Sigmoid colon (tissue), 7 donors: ENCODE measurements at regions of chr2 and their contacts with region 1.

Region 1: DNA sequence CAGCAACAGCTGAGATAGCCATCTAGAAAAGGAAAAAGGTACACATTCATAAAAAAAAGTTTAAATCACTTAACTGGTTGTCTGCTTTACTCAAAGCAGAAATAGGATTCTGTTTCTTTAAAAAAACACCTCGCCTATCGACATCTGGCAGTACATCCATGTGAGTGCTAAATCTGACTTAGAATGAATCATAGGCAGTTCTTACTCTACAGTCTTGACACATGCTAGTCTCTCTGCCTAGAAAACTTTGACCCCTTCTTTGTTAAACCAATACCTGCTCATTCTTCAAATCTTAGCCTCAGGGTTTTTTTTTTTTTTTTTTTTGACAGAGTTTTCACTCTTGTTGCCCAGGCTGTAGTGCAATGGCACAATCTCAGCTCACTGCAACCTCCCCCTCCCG is 37.1 kb upstream of the GPR75 start:
- DNase-seq: no peak
- H3K4me3 ChIP-seq: no peak overlapping the region
- H3K27ac ChIP-seq: no peak overlapping the region
- H3K4me1 ChIP-seq: no peaks in the 10 kb centered on the region
- H3K27me3 ChIP-seq: no peaks in the 10 kb centered on the region
- CTCF ChIP-seq: no peak
- EP300 ChIP-seq: no peak
- POLR2A ChIP-seq: no peak

Region 2: GRCh38 chr2:53842891-53843290 is 54.0 kb before region 1 on chr2:
- intact Hi-C with region 1: no loop called
- DNase-seq: no peak
- H3K4me3 ChIP-seq: no peak overlapping the region
- H3K27ac ChIP-seq: no peak overlapping the region
- H3K4me1 ChIP-seq: no peaks in the 10 kb centered on the region
- H3K27me3 ChIP-seq: no peaks in the 10 kb centered on the region
- CTCF ChIP-seq: no peak
- EP300 ChIP-seq: no peak
- POLR2A ChIP-seq: no peak

Region 3: DNA sequence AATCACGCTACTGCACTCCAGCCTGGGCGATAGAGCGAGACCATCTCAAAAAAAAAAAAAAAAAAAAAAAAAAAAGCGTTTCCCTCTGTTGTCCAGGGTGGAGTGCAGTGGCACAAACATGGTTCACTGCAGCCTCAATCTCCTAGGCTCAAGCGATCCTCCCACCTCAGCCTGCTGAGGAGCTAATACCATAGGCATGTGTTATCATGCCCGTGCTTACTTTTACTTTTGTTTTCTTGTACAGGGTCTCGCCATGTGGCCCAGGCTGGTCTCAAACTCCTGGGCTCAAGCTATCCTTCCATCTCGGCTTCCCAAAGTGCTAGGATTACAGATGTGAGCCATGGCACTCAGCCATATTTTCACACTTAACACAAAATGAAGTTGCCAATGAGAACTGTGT is 36.5 kb after region 1 on chr2:
- intact Hi-C with region 1: loop called (anchors 5 kb)
- DNase-seq: no peak
- H3K4me3 ChIP-seq: no peak overlapping the region
- H3K27ac ChIP-seq: no peak overlapping the region
- H3K4me1 ChIP-seq: no peaks in the 10 kb centered on the region
- H3K27me3 ChIP-seq: no peaks in the 10 kb centered on the region
- CTCF ChIP-seq: no peak
- EP300 ChIP-seq: no peak
- POLR2A ChIP-seq: no peak